PC-9 (cell line): ENCODE measurements at regions of chr12 and their contacts with region 1.

Region 1: DNA sequence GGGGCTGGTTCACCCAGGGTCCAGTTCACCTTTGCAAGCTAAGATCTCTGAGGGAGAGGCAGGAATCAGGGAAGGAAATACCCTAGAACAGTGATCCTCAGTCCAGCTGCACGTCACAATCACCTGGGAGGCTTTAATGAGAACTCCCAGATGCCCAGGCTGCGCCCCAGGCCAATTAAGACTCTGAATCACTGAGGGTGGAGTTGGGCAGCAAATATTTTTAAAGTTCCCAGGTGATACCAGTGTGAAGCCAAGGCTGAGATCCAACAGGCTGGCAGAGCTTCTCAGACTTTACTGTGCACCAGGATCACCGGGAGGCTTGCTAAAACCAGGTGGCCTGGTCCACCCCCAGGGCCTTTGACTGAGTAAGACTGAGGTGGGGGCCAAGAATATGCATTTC is 23.8 kb downstream of the MYL2 start:
- DNase-seq: peak; percentile 78 to 87
- H3K4me3 ChIP-seq: no peak overlapping the region
- H3K27ac ChIP-seq: peak overlapping the region; percentile 84
- H3K4me1 ChIP-seq: peaks cover 21% of the 10 kb centered on the region
- H3K27me3 ChIP-seq: peaks cover 3% of the 10 kb centered on the region; the same call in 1 of the 2 replicates
- CTCF ChIP-seq: no peak

Region 2: DNA sequence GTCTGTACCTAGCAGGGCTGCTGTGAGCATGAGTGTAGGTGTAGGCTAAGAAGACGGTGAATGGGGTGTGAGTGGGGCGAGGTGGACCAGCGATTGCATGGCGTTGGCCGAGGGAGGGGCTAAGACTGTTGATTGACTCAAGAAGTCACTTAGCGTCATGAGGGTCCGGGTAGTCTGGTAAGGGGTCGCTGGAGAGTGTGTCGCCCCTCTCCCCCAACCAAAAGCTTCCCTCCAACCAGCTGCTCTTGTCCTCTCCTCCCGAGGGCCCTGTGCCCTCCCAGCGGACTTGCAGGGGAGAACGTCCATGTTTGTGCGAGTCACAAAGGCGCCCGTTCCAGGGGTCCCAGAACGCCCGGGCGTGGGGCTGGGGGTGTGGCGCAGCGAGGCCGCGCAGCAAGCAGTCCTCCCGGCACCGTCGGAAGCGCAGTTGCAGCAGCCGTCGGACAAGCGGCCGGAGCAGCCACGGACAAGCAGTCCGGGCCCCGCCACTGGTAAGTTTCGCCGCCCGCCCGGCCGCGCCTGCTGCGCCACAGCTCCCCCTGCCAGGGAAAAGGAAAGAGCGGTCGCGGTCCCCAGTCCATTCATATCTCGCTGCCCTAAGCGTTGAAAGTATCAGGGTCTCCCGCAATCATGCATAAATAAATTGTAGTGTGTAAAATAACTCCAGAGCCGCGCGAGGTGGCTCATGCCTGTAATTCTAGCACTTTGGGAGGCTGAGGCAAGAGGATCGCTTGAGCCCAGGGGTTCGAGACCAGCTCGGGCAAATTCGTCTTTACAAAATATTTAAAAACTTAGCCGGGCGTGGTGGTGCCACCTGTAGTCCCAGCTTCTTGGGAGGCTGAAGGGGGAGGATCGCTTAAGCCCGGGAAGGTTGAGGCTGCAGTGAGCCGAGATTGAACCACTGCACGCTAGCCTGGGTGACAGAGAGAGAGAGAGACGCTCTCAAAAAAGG is 49.7 kb before region 1 on chr12 and contains the start of gene CCDC63:
- CTCF ChIA-PET with region 1: no interaction called
- POLR2A ChIA-PET with region 1: no interaction called
- intact Hi-C with region 1: no loop called
- DNase-seq: peak in 1 of 2 experiments; percentile 14
- H3K4me3 ChIP-seq: no peak within 1 kb of the TSS
- H3K27ac ChIP-seq: no peak within 1 kb of the TSS
- H3K4me1 ChIP-seq: no peaks in the 10 kb centered on the region
- H3K27me3 ChIP-seq: peaks cover 49% of the 10 kb centered on the region
- CTCF ChIP-seq: no peak
- total RNA-seq, gene CCDC63: not detected in 2 replicates

Region 3: DNA sequence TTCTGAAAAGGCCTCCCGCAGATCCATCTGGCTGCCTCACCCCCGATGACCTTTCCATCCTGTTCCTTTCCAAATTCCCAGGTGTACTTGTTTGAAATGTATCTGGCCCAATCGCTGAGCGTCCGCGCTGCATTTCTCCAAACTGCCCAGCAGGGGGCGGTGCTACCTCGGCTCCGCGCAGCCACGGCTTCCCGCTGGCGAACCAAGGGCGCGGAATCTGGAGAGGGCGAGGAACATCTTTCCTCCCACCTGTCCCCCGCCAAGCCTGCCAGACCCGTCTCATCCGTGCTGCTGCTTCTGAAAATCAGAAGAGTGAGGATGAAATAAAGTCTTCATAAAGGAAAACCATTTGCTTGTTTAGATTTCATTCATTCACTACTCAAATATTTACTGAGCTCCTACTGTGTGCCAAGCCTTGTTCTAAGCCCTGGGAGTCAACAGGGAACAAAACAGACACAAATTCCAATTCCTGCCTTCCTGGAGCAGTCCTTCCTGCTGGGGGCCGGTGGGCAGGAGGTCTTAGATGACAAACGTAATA is 40.6 kb after region 1 on chr12:
- CTCF ChIA-PET with region 1: no interaction called
- POLR2A ChIA-PET with region 1: no interaction called
- intact Hi-C with region 1: loop called (anchors 1 kb)
- DNase-seq: peak; percentile 36 to 49
- H3K4me3 ChIP-seq: no peak overlapping the region; the same call in 1 of the 2 replicates
- H3K27ac ChIP-seq: no peak overlapping the region
- H3K4me1 ChIP-seq: peaks cover 25% of the 10 kb centered on the region
- H3K27me3 ChIP-seq: no peaks in the 10 kb centered on the region
- CTCF ChIP-seq: peak; percentile 97

Region 4: GRCh38 chr12:111024205-111024801 is 127.7 kb after region 1 on chr12:
- CTCF ChIA-PET with region 1: interaction called, 8 read pairs
- POLR2A ChIA-PET with region 1: no interaction called
- intact Hi-C with region 1: loop called (anchors 1 kb)
- DNase-seq: peak in 1 of 2 experiments; percentile 62
- H3K4me3 ChIP-seq: no peak overlapping the region
- H3K27ac ChIP-seq: no peak overlapping the region
- H3K4me1 ChIP-seq: no peaks in the 10 kb centered on the region
- H3K27me3 ChIP-seq: peaks cover 88% of the 10 kb centered on the region
- CTCF ChIP-seq: peak; percentile 89

Region 5: DNA sequence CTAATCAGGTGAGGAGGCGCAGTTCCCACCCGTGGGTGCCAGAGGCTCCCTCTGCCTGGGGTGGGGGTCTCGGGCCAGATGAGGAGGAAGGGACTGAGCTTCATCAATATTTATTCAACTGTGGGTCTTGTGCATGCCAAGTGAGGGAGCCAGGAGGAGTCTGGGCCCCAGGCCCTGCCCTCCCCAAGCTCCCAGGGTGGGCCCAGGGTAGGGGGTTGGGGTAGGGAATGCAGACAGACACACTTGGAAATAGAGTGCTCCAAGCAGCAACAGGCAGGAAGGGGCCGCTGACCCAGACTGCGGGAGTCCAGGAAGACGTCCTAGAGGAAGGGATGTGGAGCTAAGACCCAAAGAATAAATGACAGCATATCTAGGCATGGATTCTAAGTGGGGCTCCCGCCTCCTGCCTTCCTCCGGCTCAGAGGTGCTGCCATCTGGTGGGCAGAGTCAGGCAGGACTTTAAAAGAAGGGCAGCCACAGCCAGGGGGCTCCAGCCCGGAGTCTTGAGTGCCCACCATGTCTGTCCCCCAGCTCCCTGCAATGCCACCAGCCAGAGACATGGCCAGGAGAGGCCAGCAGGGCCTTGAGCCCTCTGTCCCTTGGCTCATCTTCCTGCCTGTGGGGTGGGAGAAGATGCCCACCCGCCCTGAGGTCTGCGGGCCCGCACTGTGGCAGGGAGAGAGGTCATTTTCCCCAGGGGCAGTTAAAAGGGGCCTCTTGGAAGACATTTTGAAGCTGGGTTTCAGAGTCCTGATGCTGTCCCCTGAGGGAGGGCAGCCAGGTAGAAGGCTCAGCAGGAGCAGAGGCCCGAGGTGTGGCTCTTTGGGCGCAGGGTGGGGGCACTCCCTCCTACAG is 402.2 kb after region 1 on chr12:
- CTCF ChIA-PET with region 1: no interaction called
- POLR2A ChIA-PET with region 1: no interaction called
- intact Hi-C with region 1: loop called (anchors 1 kb)
- DNase-seq: peak in 1 of 2 experiments; percentile 51
- H3K4me3 ChIP-seq: no peak overlapping the region
- H3K27ac ChIP-seq: no peak overlapping the region
- H3K4me1 ChIP-seq: no peaks in the 10 kb centered on the region
- H3K27me3 ChIP-seq: no peaks in the 10 kb centered on the region
- CTCF ChIP-seq: peak; percentile 82

Region 6: GRCh38 chr12:111313833-111314259 is 417.3 kb after region 1 on chr12:
- CTCF ChIA-PET with region 1: no interaction called
- POLR2A ChIA-PET with region 1: no interaction called
- intact Hi-C with region 1: loop called (anchors 5 kb)
- DNase-seq: peak; percentile 49 to 68
- H3K4me3 ChIP-seq: no peak overlapping the region
- H3K27ac ChIP-seq: no peak overlapping the region
- H3K4me1 ChIP-seq: peaks cover 36% of the 10 kb centered on the region
- H3K27me3 ChIP-seq: no peaks in the 10 kb centered on the region
- CTCF ChIP-seq: peak; percentile 96